ENCODE measurements at regions of chr21 and their contacts with region 1.

Region 1: DNA sequence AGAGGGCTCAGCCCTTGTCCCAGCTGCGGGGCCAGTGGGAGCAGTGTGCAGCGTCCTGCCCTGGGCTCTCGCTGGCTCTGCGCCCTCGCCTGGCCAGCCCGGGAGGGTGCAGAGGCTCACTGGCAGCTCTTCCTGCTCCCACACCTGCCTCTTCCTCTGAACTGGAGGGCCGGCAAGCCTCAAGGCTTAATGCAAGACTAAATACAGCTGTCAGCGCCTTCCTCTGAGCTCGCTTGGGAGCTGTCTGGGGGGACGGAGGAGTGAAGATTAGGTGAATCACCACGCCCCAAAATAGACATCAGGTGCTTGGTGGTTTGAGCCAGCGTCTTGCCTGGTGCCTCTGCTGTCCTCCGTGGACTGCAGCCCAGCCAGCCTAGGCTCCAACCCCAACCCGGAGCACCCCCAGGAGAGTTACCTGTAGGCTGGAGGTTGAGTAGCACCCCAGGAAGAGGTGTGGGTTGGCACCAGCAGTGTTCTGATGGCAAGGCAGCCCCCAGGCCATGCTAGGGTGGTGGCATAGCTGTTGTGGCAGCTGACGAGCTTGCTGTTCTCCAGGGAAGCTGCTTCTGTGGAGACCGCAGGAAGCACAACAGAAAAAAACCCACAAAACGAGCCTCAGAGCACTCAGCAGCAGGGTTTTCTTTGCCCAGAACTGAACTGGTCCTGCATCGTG is 36.9 kb downstream of the UMODL1 start:
- DNase-seq: peak; percentile 75
- ATAC-seq: peak; percentile 99
- H3K4me3 Mint-ChIP-seq: no peak overlapping the region
- H3K27ac Mint-ChIP-seq: no peak overlapping the region
- H3K4me1 Mint-ChIP-seq: peaks cover 11% of the 10 kb centered on the region
- H3K27me3 Mint-ChIP-seq: peaks cover 8% of the 10 kb centered on the region

Region 2: DNA sequence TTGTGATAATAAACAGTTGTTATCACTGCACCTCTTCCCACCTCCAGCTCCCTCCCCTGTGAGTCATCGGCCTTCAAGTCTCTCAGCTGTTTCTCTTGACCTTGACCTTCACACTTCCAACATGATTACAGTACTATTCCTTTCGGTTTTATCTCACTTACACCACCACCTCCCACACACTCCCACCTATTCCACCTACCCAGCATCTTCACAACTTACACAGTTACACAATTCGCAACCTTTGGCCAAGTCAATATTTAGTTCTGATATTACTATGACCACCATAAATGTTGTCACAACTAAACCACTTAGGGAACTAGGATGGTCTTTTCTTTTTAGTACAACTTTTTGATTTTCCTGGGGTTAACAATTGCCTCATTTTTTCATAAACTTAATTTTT is 401.3 kb before region 1 on chr21:
- CTCF ChIA-PET with region 1: no interaction called
- POLR2A ChIA-PET with region 1: no interaction called
- DNase-seq: no peak
- ATAC-seq: no peak
- H3K4me3 Mint-ChIP-seq: no peak overlapping the region
- H3K27ac Mint-ChIP-seq: no peak overlapping the region
- H3K4me1 Mint-ChIP-seq: peaks cover 7% of the 10 kb centered on the region
- H3K27me3 Mint-ChIP-seq: peaks cover 17% of the 10 kb centered on the region

Region 3: GRCh38 chr21:41816220-41817165 is 291.5 kb before region 1 on chr21:
- CTCF ChIA-PET with region 1: interaction called, 28 read pairs
- POLR2A ChIA-PET with region 1: no interaction called
- DNase-seq: peak; percentile 70
- ATAC-seq: peak; percentile 86
- H3K4me3 Mint-ChIP-seq: no peak overlapping the region
- H3K27ac Mint-ChIP-seq: no peak overlapping the region
- H3K4me1 Mint-ChIP-seq: no peaks in the 10 kb centered on the region
- H3K27me3 Mint-ChIP-seq: no peaks in the 10 kb centered on the region

Region 4: GRCh38 chr21:41926117-41926806 is 181.8 kb before region 1 on chr21:
- CTCF ChIA-PET with region 1: interaction called, 12 read pairs
- POLR2A ChIA-PET with region 1: no interaction called
- DNase-seq: peak; percentile 65
- ATAC-seq: peak; percentile 94
- H3K4me3 Mint-ChIP-seq: peak overlapping the region; percentile 86
- H3K27ac Mint-ChIP-seq: peak overlapping the region; percentile 98
- H3K4me1 Mint-ChIP-seq: peaks cover 61% of the 10 kb centered on the region
- H3K27me3 Mint-ChIP-seq: no peaks in the 10 kb centered on the region

Region 5: DNA sequence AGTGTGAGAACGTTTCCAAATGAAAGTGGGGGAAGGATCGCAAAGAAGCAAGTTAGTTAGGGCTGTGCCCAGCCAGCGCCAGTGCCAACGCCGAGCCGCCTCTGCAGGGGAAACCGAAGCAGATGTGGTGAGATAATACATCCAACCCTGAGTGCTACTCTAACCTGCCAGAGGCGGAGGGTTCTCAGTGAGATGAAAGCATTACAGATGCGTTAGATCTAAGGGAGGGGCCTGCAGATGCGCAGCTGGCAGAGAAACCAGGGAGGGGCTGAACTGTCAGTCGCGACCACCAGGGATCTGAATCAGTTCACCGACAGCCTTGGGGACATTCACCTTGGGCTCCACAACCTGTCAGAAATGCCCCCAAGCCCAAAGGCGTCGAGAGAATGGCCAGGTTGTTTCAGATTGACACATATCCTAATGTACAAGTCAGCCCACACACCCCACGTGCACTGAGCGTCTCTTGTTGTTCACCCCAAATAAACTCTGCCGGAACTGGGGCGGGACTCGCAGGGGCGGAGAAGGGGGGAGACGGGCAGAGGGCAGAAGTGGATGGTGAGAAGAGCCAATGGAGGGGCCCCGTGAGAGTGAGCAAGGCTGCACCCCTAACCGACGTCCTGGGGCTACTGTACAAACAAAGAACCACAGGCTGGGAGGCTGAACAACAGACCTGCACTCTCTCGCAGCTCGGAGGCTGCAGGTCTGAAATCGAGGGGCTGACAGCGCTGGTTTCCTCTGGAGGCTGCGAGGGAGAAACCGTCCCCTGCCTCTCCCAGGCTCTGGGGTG is 45.6 kb before region 1 on chr21:
- CTCF ChIA-PET with region 1: interaction called, 13 read pairs
- POLR2A ChIA-PET with region 1: no interaction called
- DNase-seq: peak; percentile 93
- ATAC-seq: peak; percentile 85
- H3K4me3 Mint-ChIP-seq: peak overlapping the region; percentile 81
- H3K27ac Mint-ChIP-seq: peak overlapping the region; percentile 96
- H3K4me1 Mint-ChIP-seq: peaks cover 56% of the 10 kb centered on the region
- H3K27me3 Mint-ChIP-seq: peaks cover 1% of the 10 kb centered on the region

Region 6: GRCh38 chr21:42089093-42089631 is 18.9 kb before region 1 on chr21:
- CTCF ChIA-PET with region 1: interaction called, 17 read pairs
- POLR2A ChIA-PET with region 1: no interaction called
- DNase-seq: no peak
- ATAC-seq: peak; percentile 53
- H3K4me3 Mint-ChIP-seq: no peak overlapping the region
- H3K27ac Mint-ChIP-seq: no peak overlapping the region
- H3K4me1 Mint-ChIP-seq: peaks cover 10% of the 10 kb centered on the region
- H3K27me3 Mint-ChIP-seq: peaks cover 8% of the 10 kb centered on the region